ENCODE measurements at regions of chr17 and their contacts with region 1.

Region 1: GRCh38 chr17:11853321-11854151 is 143.7 kb downstream of the ZNF18 start:
- DNase-seq: no peak
- H3K4me3 ChIP-seq: no peak overlapping the region
- H3K27ac ChIP-seq: no peak overlapping the region
- H3K4me1 ChIP-seq: no peaks in the 10 kb centered on the region
- H3K27me3 ChIP-seq: no peaks in the 10 kb centered on the region

Region 2: DNA sequence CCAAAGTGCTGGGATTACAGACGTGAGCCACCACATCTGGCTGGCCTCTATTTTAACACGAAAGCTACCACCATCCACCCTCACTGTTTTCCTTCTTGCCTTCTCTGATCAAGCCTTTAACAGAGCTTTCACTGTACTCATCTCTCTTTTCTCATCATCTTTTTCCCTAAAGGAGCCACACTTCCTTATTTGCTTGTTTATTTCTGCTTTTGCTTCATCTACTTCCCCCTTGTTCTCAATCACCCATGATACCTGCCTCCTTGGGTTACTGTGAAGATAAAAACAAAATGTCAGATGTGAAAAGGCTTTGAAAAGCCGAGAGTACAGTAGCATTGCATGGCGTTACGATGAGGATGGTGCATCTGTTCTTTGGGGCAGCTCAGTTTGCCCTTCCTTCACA is 63.9 kb after region 1 on chr17:
- in situ Hi-C with region 1: loop called (anchors 10 kb)
- DNase-seq: no peak
- H3K4me3 ChIP-seq: no peak overlapping the region
- H3K27ac ChIP-seq: no peak overlapping the region
- H3K4me1 ChIP-seq: no peaks in the 10 kb centered on the region
- H3K27me3 ChIP-seq: no peaks in the 10 kb centered on the region

Measured in GM23248 (cell line).